ENCODE measurements at regions of chr9 and their contacts with region 1.

Region 1: GRCh38 chr9:4297151-4297785 is 2.6 kb downstream of the GLIS3 start:
- DNase-seq: peak; percentile 61 to 91
- H3K4me3 ChIP-seq: peak overlapping the region; percentile 68 to 77
- H3K27ac ChIP-seq: peak overlapping the region; percentile 97 to 99
- H3K4me1 ChIP-seq: peaks cover 12 to 26% of the 10 kb centered on the region in 2 donors
- H3K27me3 ChIP-seq: no peaks in the 10 kb centered on the region
- CTCF ChIP-seq: peak in 2 of 3 experiments; percentile 40 to 61

Region 2: GRCh38 chr9:2809691-2810433 is 1487.4 kb before region 1 on chr9:
- intact Hi-C with region 1: loop called (anchors 10 kb)
- DNase-seq: peak in 1 of 2 donors; percentile 67
- H3K4me3 ChIP-seq: peak overlapping the region in 1 of 2 donors; percentile 8
- H3K27ac ChIP-seq: peak overlapping the region; percentile 77 to 83
- H3K4me1 ChIP-seq: peaks cover 6 to 18% of the 10 kb centered on the region in 2 donors
- H3K27me3 ChIP-seq: no peaks in the 10 kb centered on the region
- CTCF ChIP-seq: no peak

Region 3: GRCh38 chr9:3516667-3517330 is 780.5 kb before region 1 on chr9:
- intact Hi-C with region 1: no loop called
- DNase-seq: no peak
- H3K4me3 ChIP-seq: no peak overlapping the region
- H3K27ac ChIP-seq: no peak overlapping the region
- H3K4me1 ChIP-seq: no peaks in the 10 kb centered on the region
- H3K27me3 ChIP-seq: no peaks in the 10 kb centered on the region
- CTCF ChIP-seq: no peak

Region 4: DNA sequence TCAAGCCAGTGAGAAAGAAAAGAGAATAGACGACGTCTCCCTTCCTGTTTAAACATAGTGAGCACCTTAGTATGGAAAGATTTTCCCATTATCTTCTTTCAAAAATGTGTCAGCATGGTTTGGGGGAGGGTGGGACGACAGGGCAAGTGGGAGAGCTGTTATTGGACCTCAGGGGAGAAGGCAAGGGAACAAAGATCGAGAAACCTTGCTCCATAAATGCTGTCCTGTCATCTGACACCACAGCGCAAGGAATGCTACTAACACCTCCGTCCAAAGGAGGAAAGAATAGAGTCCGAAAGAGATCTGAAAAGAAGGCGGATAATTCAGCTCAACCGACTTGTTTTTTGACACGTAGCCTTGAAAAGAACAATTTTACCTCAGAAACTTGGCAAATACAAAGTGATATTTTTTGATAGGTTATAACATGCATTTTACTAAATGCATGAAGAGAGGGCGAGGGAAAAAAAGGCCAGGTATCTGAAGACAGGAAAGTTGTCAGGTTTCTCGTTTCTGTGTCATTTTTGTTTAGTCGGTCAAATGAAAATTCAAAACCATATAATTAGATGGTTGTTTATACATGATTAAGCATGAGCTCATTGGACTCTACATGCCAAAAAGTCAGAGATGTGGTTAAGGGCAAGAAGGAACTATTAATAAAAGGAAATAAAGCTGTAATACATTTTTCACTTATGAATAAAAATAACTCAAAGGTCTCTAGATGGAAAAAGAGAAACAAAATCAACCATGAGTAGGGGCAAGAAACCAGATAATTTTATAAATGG is 153.1 kb before region 1 on chr9:
- intact Hi-C with region 1: loop called (anchors 5 kb)
- DNase-seq: no peak
- H3K4me3 ChIP-seq: peak overlapping the region; percentile 10 to 49
- H3K27ac ChIP-seq: peak overlapping the region; percentile 75 to 78
- H3K4me1 ChIP-seq: peaks cover 5 to 7% of the 10 kb centered on the region in 2 donors
- H3K27me3 ChIP-seq: no peaks in the 10 kb centered on the region
- CTCF ChIP-seq: no peak

Region 5: DNA sequence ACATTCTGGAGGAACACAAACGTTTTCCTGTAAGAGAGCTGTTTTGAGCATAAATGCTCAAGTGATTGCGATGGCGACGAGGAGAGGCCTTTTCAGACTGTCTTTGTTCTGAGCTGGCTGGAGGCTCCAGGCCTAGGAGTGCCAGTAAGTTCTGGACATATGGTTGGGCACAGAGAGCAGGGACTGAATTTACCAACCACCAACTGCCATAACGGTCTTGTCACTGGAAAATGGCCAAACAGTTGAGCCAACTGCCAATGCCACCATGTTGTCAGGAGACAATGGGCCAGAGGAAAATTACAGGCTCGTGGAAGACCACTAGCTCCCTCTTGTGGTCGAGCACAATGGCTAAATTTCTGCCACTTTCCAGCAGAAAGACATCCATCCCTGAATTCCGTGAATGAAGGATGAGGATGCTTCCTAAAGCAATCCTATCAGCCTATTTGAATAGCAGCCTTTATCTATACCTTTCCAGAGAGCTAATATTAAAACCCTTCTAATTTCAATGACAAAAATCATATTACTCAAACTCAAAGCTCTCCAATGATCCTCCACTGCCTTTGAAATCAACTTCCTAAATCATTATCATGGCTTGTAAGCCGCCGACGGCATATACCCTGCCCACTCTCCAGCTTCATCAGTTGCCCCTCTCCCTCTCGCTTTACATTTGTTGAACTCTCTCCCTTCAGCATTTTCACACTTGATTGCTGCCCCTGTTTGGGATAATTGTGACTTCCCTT is 69.5 kb after region 1 on chr9:
- intact Hi-C with region 1: no loop called
- DNase-seq: no peak
- H3K4me3 ChIP-seq: no peak overlapping the region
- H3K27ac ChIP-seq: no peak overlapping the region
- H3K4me1 ChIP-seq: no peaks in the 10 kb centered on the region
- H3K27me3 ChIP-seq: no peaks in the 10 kb centered on the region
- CTCF ChIP-seq: peak in 2 of 3 experiments; percentile 34 to 50

Region 6: DNA sequence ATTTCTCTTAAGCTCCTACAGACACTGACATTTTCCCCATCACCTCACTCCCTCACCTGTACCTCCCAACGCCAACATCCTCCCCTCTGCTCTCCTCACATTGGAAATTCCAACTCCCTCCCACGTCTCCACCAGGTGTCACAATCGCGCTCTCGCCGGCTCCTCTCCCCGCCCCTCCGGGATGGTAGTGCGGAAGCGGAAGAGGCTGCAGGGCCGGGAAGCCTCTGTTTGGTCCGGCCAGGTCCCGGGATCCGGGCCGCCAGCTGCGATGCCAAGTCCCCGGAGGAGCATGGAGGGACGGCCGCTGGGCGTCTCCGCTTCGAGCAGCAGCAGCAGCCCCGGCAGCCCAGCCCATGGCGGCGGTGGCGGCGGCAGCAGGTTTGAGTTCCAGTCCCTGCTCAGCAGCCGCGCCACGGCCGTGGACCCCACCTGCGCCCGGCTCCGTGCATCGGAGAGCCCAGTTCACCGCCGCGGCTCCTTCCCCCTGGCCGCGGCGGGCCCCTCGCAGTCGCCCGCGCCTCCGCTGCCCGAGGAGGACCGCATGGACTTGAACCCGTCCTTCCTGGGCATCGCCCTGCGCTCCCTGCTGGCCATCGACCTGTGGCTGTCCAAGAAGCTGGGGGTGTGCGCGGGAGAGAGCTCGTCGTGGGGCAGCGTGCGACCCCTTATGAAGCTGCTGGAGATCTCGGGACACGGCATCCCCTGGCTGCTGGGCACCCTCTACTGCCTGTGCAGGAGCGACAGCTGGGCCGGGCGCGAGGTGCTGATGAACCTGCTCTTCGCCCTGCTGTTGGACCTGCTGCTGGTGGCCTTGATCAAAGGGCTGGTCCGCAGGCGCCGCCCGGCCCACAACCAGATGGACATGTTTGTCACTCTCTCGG is 365.1 kb after region 1 on chr9 and contains the start of gene PLPP6:
- intact Hi-C with region 1: loop called (anchors 5 kb)
- DNase-seq: peak; percentile 59 to 95
- H3K4me3 ChIP-seq: peak within 1 kb of the TSS; percentile 66 to 86
- H3K27ac ChIP-seq: peak within 1 kb of the TSS; percentile 82 to 87
- H3K4me1 ChIP-seq: peaks cover 7 to 16% of the 10 kb centered on the region in 2 donors
- H3K27me3 ChIP-seq: no peaks in the 10 kb centered on the region
- CTCF ChIP-seq: peak; percentile 33 to 67 (median 45)
- total RNA-seq, gene PLPP6: 19.2 TPM

Region 7: DNA sequence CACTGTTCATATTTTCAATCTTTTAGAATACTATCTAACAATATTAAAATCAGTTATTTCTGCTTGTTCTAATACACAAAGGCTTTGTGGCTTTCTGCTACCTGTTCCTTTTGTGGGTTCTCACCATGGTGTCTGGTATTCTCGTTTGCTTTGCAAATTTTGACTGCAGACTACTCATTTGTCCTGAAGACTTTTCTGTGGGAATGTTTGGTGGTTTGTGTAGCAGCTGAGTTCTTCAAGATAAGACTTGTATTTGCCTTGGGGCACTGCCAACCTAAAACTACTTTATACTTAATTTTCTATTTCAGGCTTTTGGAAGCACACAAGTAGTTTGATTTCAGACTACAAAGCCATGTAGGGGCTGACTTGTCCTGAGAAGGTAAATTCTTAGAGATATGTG is 1929.4 kb after region 1 on chr9:
- intact Hi-C with region 1: loop called (anchors 10 kb)
- DNase-seq: no peak
- H3K4me3 ChIP-seq: no peak overlapping the region
- H3K27ac ChIP-seq: peak overlapping the region; percentile 50 to 58
- H3K4me1 ChIP-seq: peaks cover 3 to 45% of the 10 kb centered on the region in 2 donors
- H3K27me3 ChIP-seq: no peaks in the 10 kb centered on the region
- CTCF ChIP-seq: no peak

Measured in ascending aorta (tissue), 2 donors.